CD4-positive, alpha-beta T cell (primary cell): ENCODE measurements at regions of chr3 and their contacts with region 1.

Region 1: DNA sequence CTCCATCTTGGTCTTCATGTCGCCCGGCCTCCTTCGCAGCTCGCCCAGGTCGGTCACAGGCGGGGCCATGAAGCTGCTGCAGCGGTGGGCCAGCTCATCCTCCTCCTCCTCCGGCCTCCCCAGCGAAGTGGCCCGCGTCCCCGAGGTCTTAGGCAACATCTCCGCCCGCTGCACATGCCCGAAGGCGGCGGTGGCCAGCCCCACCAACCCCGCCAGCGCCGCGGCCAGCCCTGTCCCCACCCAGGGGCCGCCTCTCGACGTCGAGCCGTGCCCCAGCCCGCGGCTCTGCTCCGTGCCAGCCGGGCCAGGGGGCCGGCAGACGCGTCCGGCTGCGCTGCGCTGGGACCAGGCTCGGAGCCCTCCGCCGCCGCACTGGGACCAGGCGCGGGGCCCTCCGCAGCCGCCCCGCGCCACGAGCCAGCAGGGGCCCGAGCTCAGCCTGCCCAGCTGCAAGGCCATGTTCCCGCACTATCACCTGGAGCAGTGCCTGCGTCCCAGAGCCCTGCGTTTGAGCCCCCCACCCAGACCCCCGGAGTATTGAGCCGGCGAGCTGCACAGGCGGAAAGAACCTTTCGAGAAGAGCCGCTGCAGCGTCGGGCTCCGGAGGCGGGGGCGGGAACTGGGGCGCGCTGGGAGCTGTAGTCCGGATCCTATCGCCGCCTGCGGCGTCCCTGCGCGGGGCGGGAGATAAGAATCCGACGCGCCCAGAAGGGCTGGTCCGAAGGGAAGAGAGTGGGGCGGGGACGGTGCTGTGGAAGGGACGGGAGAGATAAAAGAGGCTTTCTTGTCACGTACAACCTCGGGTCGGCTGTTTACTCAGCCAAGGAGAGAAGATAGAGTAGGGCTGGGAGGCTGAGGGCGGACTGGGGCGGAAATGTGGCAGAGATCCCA is at the start of gene CPOX:
- DNase-seq: peak; percentile 61 to 91 (median 79)
- ATAC-seq: peak; percentile 96
- H3K4me3 ChIP-seq: peak within 1 kb of the TSS; percentile 63
- H3K4me3 Mint-ChIP-seq: peak within 1 kb of the TSS; percentile 94
- H3K27ac ChIP-seq: peak within 1 kb of the TSS in 1 of 2 donors; percentile 19
- H3K27ac Mint-ChIP-seq: peak within 1 kb of the TSS; percentile 82
- H3K4me1 ChIP-seq: peaks cover 16% of the 10 kb centered on the region
- H3K4me1 Mint-ChIP-seq: peaks cover 35% of the 10 kb centered on the region
- H3K27me3 ChIP-seq: no peaks in the 10 kb centered on the region
- H3K27me3 Mint-ChIP-seq: no peaks in the 10 kb centered on the region
- CTCF ChIP-seq: no peak
- total RNA-seq, gene CPOX: 7.0 to 10.5 TPM

Region 2: GRCh38 chr3:97712919-97713318 is 880.4 kb before region 1 on chr3:
- CTCF ChIA-PET with region 1: no interaction called
- POLR2A ChIA-PET with region 1: no interaction called
- intact Hi-C with region 1: no loop called
- DNase-seq: no peak
- ATAC-seq: no peak
- H3K4me3 ChIP-seq: no peak overlapping the region
- H3K4me3 Mint-ChIP-seq: no peak overlapping the region
- H3K27ac ChIP-seq: no peak overlapping the region
- H3K27ac Mint-ChIP-seq: no peak overlapping the region
- H3K4me1 ChIP-seq: no peaks in the 10 kb centered on the region
- H3K4me1 Mint-ChIP-seq: no peaks in the 10 kb centered on the region
- H3K27me3 ChIP-seq: peaks cover 0 to 4% of the 10 kb centered on the region in 2 experiments
- H3K27me3 Mint-ChIP-seq: peaks cover 11% of the 10 kb centered on the region
- CTCF ChIP-seq: no peak

Region 3: GRCh38 chr3:97764407-97765238 is 828.7 kb before region 1 on chr3 and contains the start of gene ARL6:
- CTCF ChIA-PET with region 1: no interaction called
- POLR2A ChIA-PET with region 1: interaction called, 4 read pairs
- intact Hi-C with region 1: loop called in 1 of 2 experiments (anchors 5 kb)
- DNase-seq: peak; percentile 38 to 85 (median 60)
- ATAC-seq: peak; percentile 91
- H3K4me3 ChIP-seq: peak within 1 kb of the TSS; percentile 87
- H3K4me3 Mint-ChIP-seq: peak within 1 kb of the TSS; percentile 96
- H3K27ac ChIP-seq: peak within 1 kb of the TSS; percentile 62 to 76
- H3K27ac Mint-ChIP-seq: peak within 1 kb of the TSS; percentile 87
- H3K4me1 ChIP-seq: peaks cover 9% of the 10 kb centered on the region
- H3K4me1 Mint-ChIP-seq: peaks cover 39% of the 10 kb centered on the region
- H3K27me3 ChIP-seq: no peaks in the 10 kb centered on the region
- H3K27me3 Mint-ChIP-seq: no peaks in the 10 kb centered on the region
- CTCF ChIP-seq: no peak
- total RNA-seq, gene ARL6: 1.3 to 2.1 TPM

Region 4: DNA sequence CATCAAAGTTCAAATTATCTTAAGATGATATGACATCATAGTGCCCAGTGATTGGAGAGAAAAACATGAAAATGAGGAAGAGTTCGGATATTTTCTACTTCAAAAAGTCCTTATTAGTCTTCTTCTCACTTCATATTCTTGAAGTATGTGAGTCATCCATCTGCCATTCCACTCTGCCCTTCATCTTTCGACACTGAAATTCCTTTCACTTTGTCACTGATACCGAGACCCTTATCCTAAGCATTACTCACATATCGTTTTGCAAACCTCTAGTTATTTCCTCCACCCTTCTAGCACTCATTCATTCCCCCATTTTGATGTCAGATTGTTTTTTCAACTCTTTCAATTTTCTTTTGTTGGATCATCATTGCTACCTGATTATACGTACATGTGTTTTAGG is 442.1 kb before region 1 on chr3:
- CTCF ChIA-PET with region 1: no interaction called
- POLR2A ChIA-PET with region 1: no interaction called
- intact Hi-C with region 1: no loop called
- DNase-seq: no peak
- ATAC-seq: no peak
- H3K4me3 ChIP-seq: no peak overlapping the region
- H3K4me3 Mint-ChIP-seq: no peak overlapping the region
- H3K27ac ChIP-seq: no peak overlapping the region
- H3K27ac Mint-ChIP-seq: no peak overlapping the region
- H3K4me1 ChIP-seq: no peaks in the 10 kb centered on the region
- H3K4me1 Mint-ChIP-seq: no peaks in the 10 kb centered on the region
- H3K27me3 ChIP-seq: no peaks in the 10 kb centered on the region
- H3K27me3 Mint-ChIP-seq: no peaks in the 10 kb centered on the region
- CTCF ChIP-seq: no peak

Region 5: GRCh38 chr3:98563661-98564281 is 29.5 kb before region 1 on chr3:
- CTCF ChIA-PET with region 1: interaction called, 5 read pairs
- POLR2A ChIA-PET with region 1: interaction called, 35 read pairs
- intact Hi-C with region 1: loop called in 1 of 2 experiments (anchors 5 kb)
- DNase-seq: peak in 8 of 14 experiments; percentile 10 to 90 (median 32)
- ATAC-seq: peak; percentile 70
- H3K4me3 ChIP-seq: no peak overlapping the region
- H3K4me3 Mint-ChIP-seq: peak overlapping the region; percentile 84
- H3K27ac ChIP-seq: peak overlapping the region; percentile 77 to 90
- H3K27ac Mint-ChIP-seq: peak overlapping the region; percentile 100
- H3K4me1 ChIP-seq: peaks cover 46% of the 10 kb centered on the region
- H3K4me1 Mint-ChIP-seq: peaks cover 83% of the 10 kb centered on the region
- H3K27me3 ChIP-seq: no peaks in the 10 kb centered on the region
- H3K27me3 Mint-ChIP-seq: no peaks in the 10 kb centered on the region
- CTCF ChIP-seq: no peak

Region 6: DNA sequence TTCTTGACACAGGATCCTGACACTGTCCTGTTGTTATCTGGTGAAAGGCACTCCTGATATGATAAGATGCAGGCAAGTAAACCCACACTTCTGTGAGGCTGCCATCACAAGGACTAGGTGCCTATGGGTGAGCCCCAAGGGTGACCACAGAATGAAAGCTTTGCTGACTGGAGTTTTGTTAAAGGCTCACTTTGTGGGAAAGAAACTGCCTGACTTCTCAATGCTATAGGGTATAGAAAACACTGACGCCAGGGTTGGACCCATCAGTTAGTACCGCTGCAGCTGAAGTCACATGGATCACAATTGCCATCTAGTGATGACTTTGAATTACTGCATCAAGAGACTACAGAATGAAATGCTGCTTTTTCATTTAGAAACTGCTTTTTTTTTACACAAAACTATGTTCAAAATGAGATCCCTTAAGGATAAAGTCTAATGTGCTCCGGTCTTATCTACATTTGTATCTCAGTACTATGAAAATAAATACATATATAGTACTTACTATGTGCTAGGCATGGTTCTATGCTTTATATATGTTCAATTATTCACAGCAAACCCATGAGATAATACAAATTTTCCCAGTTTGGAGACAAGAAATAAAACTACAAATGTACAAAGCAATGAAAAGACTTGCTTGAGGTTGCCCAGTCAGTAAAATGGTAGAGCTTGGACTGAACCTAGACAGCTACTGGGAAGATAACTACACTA is 1160.1 kb after region 1 on chr3:
- CTCF ChIA-PET with region 1: no interaction called
- POLR2A ChIA-PET with region 1: no interaction called
- intact Hi-C with region 1: loop called in 1 of 2 experiments (anchors 2 kb)
- DNase-seq: peak in 3 of 14 experiments; percentile 28 to 51 (median 46)
- ATAC-seq: peak; percentile 62
- H3K4me3 ChIP-seq: no peak overlapping the region
- H3K4me3 Mint-ChIP-seq: no peak overlapping the region
- H3K27ac ChIP-seq: no peak overlapping the region
- H3K27ac Mint-ChIP-seq: no peak overlapping the region
- H3K4me1 ChIP-seq: no peaks in the 10 kb centered on the region
- H3K4me1 Mint-ChIP-seq: no peaks in the 10 kb centered on the region
- H3K27me3 ChIP-seq: peaks cover 0 to 5% of the 10 kb centered on the region in 2 experiments
- H3K27me3 Mint-ChIP-seq: peaks cover 22% of the 10 kb centered on the region
- CTCF ChIP-seq: peak; percentile 47

Region 7: DNA sequence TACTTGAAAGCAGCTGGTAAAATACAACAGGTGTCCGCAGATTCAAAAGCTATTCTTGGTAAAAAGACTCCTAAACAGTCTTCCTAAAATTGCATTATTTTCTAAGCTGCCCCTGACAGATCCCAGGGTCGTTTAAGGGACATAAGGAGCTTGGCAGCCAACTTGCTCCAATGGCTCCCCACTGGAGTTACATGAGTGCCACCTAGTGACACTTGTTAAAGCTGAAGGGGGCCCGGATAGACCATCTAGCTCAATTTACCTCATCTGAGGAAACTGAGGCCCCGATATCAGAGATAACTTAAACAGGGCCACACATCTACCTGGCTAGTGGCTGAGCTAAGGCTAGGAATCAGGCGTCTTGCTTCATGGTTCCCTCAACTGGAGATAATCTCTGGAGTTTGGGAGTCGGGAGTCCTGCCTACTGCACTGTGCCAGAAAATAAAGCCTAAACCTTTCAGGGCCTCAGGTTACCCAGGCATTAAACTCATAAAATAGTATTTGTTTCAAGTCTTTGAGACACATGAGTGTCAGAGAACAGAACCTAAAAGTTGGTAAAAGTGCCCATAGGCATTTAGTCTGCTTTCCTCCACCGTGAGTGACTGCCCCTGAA is 1661.0 kb after region 1 on chr3:
- CTCF ChIA-PET with region 1: no interaction called
- POLR2A ChIA-PET with region 1: no interaction called
- intact Hi-C with region 1: loop called in 1 of 2 experiments (anchors 10 kb)
- DNase-seq: peak in 5 of 14 experiments; percentile 11 to 64 (median 37)
- ATAC-seq: peak; percentile 43
- H3K4me3 ChIP-seq: no peak overlapping the region
- H3K4me3 Mint-ChIP-seq: no peak overlapping the region
- H3K27ac ChIP-seq: no peak overlapping the region
- H3K27ac Mint-ChIP-seq: no peak overlapping the region
- H3K4me1 ChIP-seq: no peaks in the 10 kb centered on the region
- H3K4me1 Mint-ChIP-seq: peaks cover 9% of the 10 kb centered on the region
- H3K27me3 ChIP-seq: no peaks in the 10 kb centered on the region
- H3K27me3 Mint-ChIP-seq: no peaks in the 10 kb centered on the region
- CTCF ChIP-seq: peak; percentile 50